ENCODE measurements at regions of chr1 and their contacts with region 1.

Region 1: DNA sequence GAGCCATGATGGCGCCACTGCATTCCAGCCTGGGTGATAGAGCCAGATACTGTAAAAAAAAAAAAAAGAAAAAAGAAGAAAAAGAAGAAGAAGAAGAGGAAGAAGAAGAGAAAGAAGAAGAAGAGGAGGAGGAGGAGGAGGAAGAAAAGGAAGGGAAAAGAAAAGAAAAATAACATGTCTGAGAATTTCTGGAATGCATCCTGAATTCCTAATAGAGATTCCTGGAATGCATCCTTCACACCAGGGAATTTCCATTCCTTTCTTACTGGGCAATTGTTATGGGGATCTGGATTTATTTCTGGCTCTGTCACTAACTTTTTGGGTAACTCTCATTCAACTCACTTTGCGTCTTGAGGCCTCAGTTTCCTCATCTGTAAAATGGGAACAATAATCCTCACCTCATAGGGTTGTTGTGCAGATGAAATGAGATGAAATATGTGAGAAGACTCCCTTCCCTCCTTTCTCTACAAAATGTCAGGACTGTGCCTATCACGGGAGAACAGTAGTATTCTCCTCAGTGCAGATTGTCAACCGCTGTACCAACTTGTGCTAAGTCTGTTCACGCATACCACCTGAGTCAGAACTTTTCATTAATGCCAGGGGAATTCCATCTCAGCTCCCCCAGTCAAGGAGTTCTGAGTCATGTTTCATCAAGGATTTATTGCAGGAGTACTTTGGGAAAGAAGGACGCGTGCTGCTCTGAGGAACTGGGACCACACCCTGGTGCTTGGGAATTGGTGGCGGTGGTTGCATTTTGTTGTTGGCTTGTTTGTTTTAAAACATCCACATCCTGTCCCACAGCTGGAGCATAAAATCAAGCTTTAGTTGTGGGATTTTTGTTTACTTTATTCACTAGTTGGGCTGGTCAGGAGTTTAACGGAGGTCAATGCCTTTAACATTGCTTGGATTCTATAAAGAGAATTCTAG is 42.4 kb upstream of the ROR1 start:
- DNase-seq: no peak
- ATAC-seq: peak in 4 of 8 donors; percentile 28 to 78 (median 62)
- H3K4me3 ChIP-seq: peak overlapping the region in 1 of 10 donors; percentile 24
- H3K27ac ChIP-seq: no peak overlapping the region
- H3K4me1 ChIP-seq: peaks cover 0 to 7% (median 0%) of the 10 kb centered on the region in 9 donors
- H3K27me3 ChIP-seq: no peaks in the 10 kb centered on the region
- CTCF ChIP-seq: no peak

Region 2: GRCh38 chr1:63742526-63742925 is 11.1 kb after region 1 on chr1:
- intact Hi-C with region 1: loop called in 1 of 10 experiments (anchors 1 kb)
- DNase-seq: no peak
- ATAC-seq: no peak
- H3K4me3 ChIP-seq: no peak overlapping the region
- H3K27ac ChIP-seq: no peak overlapping the region
- H3K4me1 ChIP-seq: peaks cover 0 to 7% (median 3%) of the 10 kb centered on the region in 9 donors
- H3K27me3 ChIP-seq: no peaks in the 10 kb centered on the region
- CTCF ChIP-seq: no peak

Measured in heart right ventricle (tissue), 16 donors.